Ascending aorta (tissue), 2 donors: ENCODE measurements at regions of chr13 and their contacts with region 1.

Region 1: DNA sequence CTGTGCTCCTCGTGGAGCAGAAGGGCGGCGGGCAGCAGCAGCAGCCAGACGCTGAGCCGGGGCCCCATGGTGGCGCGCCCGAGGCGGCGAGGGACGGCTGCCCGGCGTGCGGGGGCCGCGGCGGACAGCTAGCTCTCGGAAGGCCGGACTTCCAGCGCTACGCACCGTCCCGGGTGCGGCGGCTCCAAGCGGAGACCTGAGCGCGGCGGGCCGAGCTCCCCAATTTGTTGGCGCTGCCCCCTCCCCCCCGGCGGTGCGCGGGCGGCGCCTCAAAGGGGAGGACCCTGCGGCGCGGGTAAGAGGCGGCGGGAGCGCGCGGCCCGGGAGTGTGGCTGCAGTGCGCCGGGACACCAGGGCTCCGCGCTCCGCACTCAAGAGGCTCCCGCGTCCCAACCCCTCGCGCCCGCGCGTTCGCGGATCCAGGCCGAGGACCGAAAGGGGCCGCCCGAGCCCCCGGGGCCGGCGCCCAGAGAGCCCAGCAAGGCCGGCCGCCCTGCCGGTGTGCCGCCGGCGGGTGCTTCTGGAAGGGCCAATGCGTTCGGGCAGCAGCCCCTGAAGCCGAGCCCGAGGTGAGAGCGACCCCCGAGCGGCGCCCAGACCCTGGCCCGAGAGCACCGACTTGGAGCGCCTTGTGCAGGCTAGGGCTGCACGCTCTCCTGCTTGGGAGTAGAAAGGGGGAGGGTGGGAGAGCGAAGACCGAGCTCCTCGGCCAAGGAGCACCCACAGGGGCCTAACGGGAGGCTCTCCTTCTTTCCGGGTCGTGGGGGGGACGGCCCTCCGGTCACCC is at the starts of genes COL4A1 and COL4A2:
- DNase-seq: peak in 1 of 2 donors; percentile 88
- H3K4me3 ChIP-seq: peak within 1 kb of the TSS; percentile 84
- H3K27ac ChIP-seq: peak within 1 kb of the TSS; percentile 95 to 99
- H3K4me1 ChIP-seq: peaks cover 13 to 39% of the 10 kb centered on the region in 2 donors
- H3K27me3 ChIP-seq: no peaks in the 10 kb centered on the region
- CTCF ChIP-seq: no peak
- total RNA-seq, gene COL4A1: 756 TPM
- total RNA-seq, gene COL4A2: 1,227 TPM

Region 2: GRCh38 chr13:110116072-110116487 is 191.1 kb before region 1 on chr13:
- intact Hi-C with region 1: no loop called
- DNase-seq: no peak
- H3K4me3 ChIP-seq: no peak overlapping the region
- H3K27ac ChIP-seq: no peak overlapping the region
- H3K4me1 ChIP-seq: no peaks in the 10 kb centered on the region
- H3K27me3 ChIP-seq: no peaks in the 10 kb centered on the region
- CTCF ChIP-seq: peak; percentile 29 to 62 (median 51)

Region 3: DNA sequence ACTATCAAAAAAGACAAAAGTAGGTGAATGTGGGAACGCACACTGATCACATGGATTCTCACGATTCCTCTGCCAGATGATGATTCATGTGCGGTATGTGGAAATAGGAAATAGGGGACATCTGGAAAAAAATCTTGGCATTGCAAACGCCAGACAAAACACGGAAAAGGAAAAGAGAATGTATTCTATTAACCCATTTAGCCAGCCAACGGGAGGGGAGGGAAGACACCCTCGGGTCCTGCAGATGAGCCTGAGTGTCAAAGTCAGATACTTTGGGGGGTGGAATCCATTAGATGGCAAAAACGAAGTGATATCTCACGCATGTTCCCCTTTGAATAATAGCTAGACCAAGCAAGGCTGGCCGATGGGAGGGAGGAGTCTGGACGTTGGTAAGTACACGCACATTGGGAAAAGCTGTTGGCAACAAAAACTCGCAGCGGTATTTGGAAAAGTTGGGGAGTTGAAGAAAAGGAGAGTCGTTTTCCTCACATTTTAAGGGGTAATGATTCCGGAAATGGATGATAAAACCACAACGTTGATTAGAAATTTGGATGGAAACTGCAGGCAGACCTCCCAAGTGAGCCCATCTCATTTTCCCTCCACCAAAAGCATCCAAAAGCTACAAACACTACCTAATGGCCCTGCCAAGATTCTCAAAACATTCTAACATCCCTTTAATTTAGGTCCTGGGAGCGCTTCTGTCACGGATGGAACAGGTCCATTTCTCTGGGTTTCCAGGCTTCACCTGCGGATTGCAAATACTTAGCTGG is 73.8 kb before region 1 on chr13:
- intact Hi-C with region 1: loop called (anchors 5 kb)
- DNase-seq: peak in 1 of 2 donors; percentile 86
- H3K4me3 ChIP-seq: peak overlapping the region; percentile 22 to 39
- H3K27ac ChIP-seq: peak overlapping the region; percentile 68 to 76
- H3K4me1 ChIP-seq: peaks cover 25 to 52% of the 10 kb centered on the region in 2 donors
- H3K27me3 ChIP-seq: no peaks in the 10 kb centered on the region
- CTCF ChIP-seq: no peak